ENCODE measurements at regions of chr3 and their contacts with region 1.

Region 1: DNA sequence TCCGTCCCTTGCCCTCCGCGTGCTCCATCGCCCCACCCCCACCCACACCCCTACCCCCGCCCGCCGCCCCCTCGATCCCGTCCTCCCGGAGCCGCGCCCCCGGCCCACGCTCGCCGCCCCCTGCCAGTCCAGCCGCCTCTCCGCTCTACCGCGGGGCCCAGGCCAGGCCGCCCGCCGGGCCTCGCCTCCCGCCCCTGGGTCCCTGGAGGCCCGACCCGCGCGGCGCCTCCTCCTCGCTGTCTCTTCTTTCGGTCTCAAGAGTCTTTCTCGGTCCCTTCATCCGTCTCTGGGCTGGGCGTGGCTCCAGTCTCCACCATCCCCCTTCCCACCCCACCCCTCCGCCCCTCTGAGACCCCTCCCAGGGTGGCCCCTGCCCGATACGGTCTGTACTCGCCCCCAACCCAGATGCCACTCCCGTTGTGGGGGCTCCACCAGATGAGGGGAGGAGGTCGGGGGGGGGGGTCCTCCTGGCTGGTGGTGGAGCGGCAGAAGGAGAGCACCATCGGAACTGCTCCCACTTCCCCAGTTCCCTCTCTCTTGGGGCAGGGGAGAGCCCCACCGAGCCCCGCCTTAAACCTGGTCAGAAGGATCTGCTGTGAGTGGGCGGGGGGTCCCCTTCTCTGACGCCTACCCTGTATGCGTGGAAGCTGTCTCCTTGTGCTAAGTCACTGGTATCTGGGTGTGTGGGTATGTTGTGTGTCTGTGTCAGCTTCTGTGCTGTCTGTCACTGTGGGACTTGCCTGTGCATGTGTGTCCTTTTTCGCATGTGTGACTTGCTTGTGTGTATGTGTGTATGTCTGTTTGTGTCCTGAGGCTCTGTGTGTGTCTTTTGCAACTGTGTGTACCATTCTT is 1.0 kb downstream of the PRKCD start:
- DNase-seq: no peak
- ATAC-seq: no peak
- H3K4me3 ChIP-seq: peak overlapping the region; percentile 68 to 71
- H3K27ac ChIP-seq: peak overlapping the region; percentile 34
- H3K4me1 ChIP-seq: peaks cover 21% of the 10 kb centered on the region
- H3K27me3 ChIP-seq: no peaks in the 10 kb centered on the region
- CTCF ChIP-seq: no peak

Region 2: DNA sequence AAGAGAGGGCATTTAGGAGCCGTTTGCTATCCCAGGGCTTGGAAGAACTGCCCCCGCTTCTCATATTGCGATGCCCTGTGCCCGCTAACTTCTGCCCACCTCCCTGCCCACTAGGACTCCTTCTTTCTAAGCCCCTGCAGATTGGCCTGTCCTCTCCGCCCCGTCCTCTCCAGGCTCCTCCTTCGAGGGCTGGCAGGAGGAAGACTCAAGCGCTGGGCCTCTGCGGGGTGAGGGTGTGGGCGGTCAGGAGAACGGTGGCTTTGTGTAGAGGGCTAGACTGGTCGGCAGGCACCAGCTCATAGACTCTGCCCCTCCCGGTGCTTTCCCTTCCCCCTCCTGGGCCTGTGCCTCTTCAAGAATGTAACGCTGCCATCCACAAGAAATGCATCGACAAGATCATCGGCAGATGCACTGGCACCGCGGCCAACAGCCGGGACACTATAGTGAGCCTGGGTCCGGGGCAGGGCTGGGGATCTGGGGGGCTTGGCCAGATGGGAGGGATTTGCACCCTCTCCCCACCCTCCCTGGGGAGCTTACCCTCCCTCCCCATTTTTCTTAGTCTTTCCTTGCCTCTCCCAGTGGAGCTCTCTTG is 20.8 kb after region 1 on chr3:
- CTCF ChIA-PET with region 1: interaction called, 10 read pairs
- POLR2A ChIA-PET with region 1: no interaction called
- in situ Hi-C with region 1: no loop called
- intact Hi-C with region 1: no loop called
- DNase-seq: no peak
- ATAC-seq: no peak
- H3K4me3 ChIP-seq: no peak overlapping the region
- H3K27ac ChIP-seq: no peak overlapping the region
- H3K4me1 ChIP-seq: no peaks in the 10 kb centered on the region
- H3K27me3 ChIP-seq: no peaks in the 10 kb centered on the region
- CTCF ChIP-seq: no peak